Activated CD4-positive, alpha-beta memory T cell treated with anti-CD3 and anti-CD28 coated beads for 36 hours (primary cell): ENCODE measurements at regions of chr1 and their contacts with region 1.

Region 1: DNA sequence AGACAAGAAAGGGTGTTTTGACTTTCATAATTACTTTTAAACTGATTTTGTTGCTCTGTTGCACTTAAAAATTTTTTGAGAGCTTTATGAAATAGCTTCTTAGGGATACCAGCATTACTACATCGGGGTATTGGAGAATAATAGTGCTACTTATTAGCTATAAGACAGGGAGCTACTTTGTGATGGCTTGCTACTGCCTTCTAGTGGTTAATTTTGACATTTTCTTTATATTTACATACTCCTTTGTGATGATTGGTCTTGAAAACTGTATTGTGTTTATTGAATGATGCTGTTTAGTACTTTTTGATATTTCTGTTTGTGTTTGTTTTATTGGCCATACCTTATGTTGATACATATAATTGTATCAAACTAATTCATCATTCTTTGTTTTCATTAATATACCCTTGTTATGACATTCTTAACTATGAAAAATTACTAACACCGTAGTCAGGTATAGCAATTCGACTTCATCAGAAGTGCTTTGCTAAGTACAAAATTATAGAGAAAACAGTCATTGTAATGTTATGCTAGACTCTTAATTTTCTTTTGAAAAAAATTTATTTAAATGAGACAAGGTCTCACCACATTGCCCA is 85.5 kb downstream of the CLIC4 start:
- DNase-seq: no peak
- H3K4me3 Mint-ChIP-seq: no peak overlapping the region
- H3K27ac Mint-ChIP-seq: no peak overlapping the region
- H3K4me1 Mint-ChIP-seq: no peaks in the 10 kb centered on the region
- H3K27me3 Mint-ChIP-seq: peaks cover 4% of the 10 kb centered on the region

Region 2: DNA sequence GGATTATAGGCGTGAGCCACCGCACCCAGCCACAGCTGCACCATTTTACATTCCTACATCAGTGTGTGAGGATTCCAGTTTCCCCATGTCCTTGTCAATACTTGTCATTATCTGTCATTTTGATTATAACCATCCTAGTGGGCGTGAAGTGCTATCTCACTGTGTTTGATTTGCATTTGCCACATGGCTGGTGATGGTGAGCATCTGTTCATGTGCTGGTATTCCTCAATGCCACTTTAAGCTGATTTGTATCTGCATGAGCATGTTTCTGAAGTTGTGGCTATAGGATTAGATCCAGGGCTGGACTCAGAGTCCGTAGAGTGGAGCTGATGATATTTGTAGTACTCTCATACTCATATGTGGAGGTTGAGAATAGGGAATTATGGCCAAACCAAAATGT is 151.1 kb before region 1 on chr1:
- CTCF ChIA-PET with region 1: interaction called, 13 read pairs
- POLR2A ChIA-PET with region 1: no interaction called
- intact Hi-C with region 1: no loop called
- DNase-seq: no peak
- H3K4me3 Mint-ChIP-seq: no peak overlapping the region
- H3K27ac Mint-ChIP-seq: no peak overlapping the region
- H3K4me1 Mint-ChIP-seq: no peaks in the 10 kb centered on the region
- H3K27me3 Mint-ChIP-seq: no peaks in the 10 kb centered on the region

Region 3: DNA sequence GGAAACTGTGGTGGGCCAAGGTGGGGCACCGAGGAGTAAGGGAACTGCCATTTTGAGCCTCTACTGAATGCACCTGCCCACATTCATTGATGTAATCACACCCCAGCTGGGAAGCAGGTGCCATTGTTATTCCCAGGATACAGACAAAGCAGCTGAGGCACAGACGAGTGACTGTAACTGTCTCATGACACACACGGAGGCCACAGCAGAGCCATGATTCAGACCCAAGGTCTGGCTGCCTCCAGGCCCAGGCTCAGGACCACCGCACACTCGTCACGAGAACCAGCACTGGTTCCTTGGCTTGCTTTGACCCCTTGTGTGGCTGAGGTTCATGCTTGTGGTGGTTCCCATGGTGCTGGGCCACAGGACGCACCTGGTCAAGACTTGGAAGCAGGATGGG is 131.1 kb before region 1 on chr1:
- CTCF ChIA-PET with region 1: interaction called, 299 read pairs
- POLR2A ChIA-PET with region 1: no interaction called
- intact Hi-C with region 1: no loop called
- DNase-seq: no peak
- H3K4me3 Mint-ChIP-seq: no peak overlapping the region
- H3K27ac Mint-ChIP-seq: no peak overlapping the region
- H3K4me1 Mint-ChIP-seq: peaks cover 1% of the 10 kb centered on the region
- H3K27me3 Mint-ChIP-seq: peaks cover 3% of the 10 kb centered on the region

Region 4: DNA sequence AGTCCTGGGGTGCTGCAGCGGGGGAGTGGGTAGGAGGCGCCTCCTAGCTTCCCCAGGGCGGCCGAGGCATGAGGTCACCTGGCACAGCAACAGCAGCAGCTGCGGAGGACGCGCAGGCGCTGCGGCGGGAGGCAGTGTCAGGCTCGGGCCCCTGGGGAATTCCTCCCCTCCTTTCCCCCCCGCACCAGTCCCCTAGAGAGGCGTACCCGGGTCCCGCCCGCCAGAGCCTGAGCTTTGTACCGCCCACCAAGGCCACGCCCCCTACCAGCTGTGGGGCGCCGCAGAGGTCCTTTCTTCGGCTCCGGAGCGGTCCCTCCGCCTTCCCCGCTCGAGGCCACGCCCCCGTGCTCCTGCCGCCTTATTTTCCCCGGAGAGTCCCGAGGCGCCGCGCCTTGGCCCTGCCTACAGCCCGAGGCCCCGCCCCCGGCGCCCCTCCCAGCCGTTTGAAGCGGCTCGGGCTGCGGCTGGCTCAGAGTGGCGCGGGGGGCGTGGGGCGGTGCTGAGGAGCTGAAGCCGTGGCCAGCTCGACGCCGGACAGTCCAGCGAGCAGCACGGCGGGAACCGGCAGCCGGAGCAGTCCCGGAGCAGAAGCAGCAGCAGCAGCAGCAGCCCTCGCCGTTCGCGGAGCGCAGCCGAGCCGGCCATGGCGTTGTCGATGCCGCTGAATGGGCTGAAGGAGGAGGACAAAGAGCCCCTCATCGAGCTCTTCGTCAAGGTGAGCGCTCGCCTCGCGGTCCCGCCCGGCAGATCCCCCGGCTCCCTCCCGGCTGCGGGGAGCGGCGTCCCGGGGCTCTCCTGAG is 85.7 kb before region 1 on chr1 and contains the start of gene CLIC4:
- CTCF ChIA-PET with region 1: interaction called, 7 read pairs
- POLR2A ChIA-PET with region 1: no interaction called
- intact Hi-C with region 1: loop called (anchors 10 kb)
- DNase-seq: peak; percentile 100
- H3K4me3 Mint-ChIP-seq: peak within 1 kb of the TSS; percentile 76
- H3K27ac Mint-ChIP-seq: peak within 1 kb of the TSS; percentile 58
- H3K4me1 Mint-ChIP-seq: peaks cover 34% of the 10 kb centered on the region
- H3K27me3 Mint-ChIP-seq: no peaks in the 10 kb centered on the region
- total RNA-seq, gene CLIC4: 25.5 to 26.3 TPM

Region 5: GRCh38 chr1:25204797-25205480 is 374.2 kb after region 1 on chr1:
- CTCF ChIA-PET with region 1: interaction called, 11 read pairs
- POLR2A ChIA-PET with region 1: no interaction called
- intact Hi-C with region 1: no loop called
- DNase-seq: no peak
- H3K4me3 Mint-ChIP-seq: no peak overlapping the region
- H3K27ac Mint-ChIP-seq: no peak overlapping the region
- H3K4me1 Mint-ChIP-seq: no peaks in the 10 kb centered on the region
- H3K27me3 Mint-ChIP-seq: peaks cover under 1% of the 10 kb centered on the region